ENCODE measurements at regions of chr2 and their contacts with region 1.

Region 1: GRCh38 chr2:43226558-43226954 is at the start of gene ZFP36L2:
- DNase-seq: no peak
- H3K4me3 ChIP-seq: peak within 1 kb of the TSS; percentile 86
- CTCF ChIP-seq: peak; percentile 2

Region 2: DNA sequence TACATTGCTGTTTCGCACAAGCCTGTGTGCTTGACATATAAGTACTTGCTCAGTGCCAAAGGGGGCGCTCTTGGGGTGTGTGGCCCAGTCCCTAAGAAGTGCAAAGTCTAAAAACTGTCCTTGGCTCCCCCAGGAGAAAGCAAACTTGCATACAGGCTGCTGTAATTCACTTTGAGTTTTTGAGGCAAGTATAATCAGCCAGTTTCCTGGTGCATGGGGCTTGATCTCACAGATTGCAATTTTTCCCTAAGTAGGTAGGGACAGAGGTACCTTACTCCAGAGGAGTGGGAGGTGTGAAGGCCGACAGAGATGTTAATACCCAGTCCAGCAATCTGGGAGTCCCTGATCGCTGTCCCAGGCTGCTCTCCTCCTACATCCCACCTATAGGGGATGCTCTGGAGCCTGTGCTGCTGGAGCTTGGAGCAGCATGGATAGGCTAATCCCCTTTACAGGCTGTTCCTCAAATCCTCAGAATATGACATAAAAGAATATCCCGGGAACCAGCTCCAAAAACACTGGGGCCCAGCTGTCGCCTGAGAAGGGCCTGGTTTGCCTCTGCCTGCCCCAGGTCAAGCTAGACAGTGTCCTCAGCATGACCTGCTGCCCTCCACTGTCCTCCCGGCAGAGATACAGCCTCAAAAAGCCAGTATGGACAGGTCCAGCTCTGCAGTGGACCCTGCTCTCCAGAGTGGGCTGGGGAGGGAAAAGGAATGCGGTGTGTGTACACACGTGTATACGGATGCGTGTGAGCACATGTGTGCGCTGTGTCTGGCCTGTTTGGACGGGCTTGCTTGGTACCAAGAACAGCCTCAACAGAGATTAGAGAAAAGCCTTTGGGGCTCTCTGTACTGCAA is 297.6 kb before region 1 on chr2:
- CTCF ChIA-PET with region 1: interaction called, 13 read pairs
- POLR2A ChIA-PET with region 1: interaction called, 3 read pairs
- DNase-seq: no peak
- H3K4me3 ChIP-seq: no peak overlapping the region
- CTCF ChIP-seq: peak; percentile 64

Region 3: GRCh38 chr2:42964439-42965083 is 262.0 kb before region 1 on chr2:
- CTCF ChIA-PET with region 1: interaction called, 248 read pairs
- POLR2A ChIA-PET with region 1: interaction called, 16 read pairs
- DNase-seq: peak; percentile 81
- H3K4me3 ChIP-seq: no peak overlapping the region
- CTCF ChIP-seq: no peak

Region 4: GRCh38 chr2:43041661-43042360 is 184.7 kb before region 1 on chr2:
- CTCF ChIA-PET with region 1: interaction called, 5 read pairs
- POLR2A ChIA-PET with region 1: interaction called, 11 read pairs
- DNase-seq: peak; percentile 71
- H3K4me3 ChIP-seq: no peak overlapping the region
- CTCF ChIP-seq: no peak

Region 5: DNA sequence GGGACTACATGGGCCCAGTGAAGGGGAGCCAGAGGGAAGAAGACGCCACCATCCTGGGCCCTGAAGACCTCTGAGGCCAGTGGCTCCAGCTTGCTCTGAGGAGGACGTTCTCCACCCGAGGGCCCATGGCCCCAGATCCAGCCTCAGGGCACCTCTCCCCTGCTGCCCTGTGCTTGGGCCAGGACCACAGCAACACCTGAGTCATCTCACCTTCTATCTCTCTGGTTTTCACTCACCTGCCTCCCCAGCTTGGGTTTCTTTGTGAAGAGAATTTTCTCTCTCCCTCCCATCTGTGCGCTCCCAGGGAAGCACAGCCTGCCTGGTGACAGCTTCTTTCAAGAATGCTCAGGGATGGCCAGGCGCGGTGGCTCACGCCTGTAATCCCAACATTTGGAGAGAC is 20.0 kb before region 1 on chr2:
- CTCF ChIA-PET with region 1: no interaction called
- POLR2A ChIA-PET with region 1: no interaction called
- DNase-seq: no peak
- H3K4me3 ChIP-seq: no peak overlapping the region
- CTCF ChIP-seq: no peak

Region 6: DNA sequence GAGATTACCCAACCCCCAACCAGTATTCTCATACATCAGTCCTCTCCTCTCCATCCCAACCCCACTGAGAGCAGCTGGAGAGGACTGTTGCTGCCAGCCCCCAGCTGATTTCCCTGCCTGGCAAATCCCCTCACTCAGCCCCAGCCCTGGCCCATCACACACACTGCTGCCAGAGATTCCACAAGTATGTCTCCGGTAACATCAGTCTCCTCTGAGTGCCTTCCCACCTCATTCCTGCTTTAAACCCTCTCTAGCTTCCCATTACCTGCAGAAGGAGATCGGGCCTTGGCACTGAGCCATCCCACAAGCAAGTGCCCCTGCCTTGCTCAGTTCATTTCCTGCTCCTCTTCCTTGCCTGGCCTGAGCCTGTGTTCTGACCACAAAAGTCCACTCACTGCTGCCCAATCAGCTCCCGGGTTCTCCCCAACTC is 50.4 kb after region 1 on chr2:
- CTCF ChIA-PET with region 1: interaction called, 10 read pairs
- POLR2A ChIA-PET with region 1: no interaction called
- DNase-seq: no peak
- H3K4me3 ChIP-seq: no peak overlapping the region
- CTCF ChIP-seq: no peak